Activated CD4-positive, alpha-beta memory T cell treated with anti-CD3 and anti-CD28 coated beads, Interleukin-2, amount 10 ng/mL, durations not matched to agents 7 days and 5 days (primary cell): ENCODE measurements at regions of chr17 and their contacts with region 1.

Region 1: DNA sequence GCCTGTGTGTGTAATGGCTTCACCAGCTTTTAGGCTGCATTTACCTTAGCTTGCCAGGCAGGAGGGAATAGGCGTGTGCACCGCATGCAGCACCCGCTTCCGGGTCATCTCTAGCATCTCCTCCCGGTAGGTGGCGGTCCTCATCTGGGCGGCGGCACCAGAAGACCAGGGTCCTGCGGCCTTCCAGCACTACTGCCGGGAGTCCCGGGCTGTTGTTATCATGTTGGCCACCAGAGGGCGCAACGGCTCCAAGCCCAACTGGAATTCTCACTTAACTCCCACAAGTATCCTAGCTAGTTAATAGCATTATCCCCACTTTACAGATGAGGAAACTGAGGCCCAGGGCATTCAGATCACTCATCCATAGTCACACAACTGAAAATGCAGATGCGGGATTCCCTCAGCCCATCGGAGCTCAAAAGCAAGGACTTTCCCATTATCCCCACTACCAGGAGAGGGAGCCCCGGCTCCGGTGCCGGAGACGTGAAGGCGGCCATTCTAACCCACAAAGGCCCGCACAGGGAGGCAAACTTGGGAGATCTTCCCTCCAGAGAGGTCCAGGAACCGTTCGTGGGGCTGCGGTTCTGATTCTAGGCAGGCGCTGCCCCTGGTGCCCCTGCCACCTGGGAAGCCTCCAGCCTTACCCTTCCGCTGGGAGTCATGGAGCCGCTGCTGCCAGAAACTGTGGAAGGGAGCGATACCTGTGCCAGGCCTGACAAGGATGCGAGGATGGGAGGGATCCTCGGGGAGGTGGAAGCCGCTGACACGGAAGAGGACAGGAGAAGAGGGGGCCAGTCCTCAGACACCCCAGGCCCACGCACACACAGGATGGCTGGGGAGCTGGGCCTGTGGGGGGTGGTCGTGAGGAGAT is 23.9 kb downstream of the LGALS9 start:
- DNase-seq: peak; percentile 66
- H3K4me3 Mint-ChIP-seq: no peak overlapping the region
- H3K27ac Mint-ChIP-seq: no peak overlapping the region
- H3K4me1 Mint-ChIP-seq: peaks cover 5% of the 10 kb centered on the region
- H3K27me3 Mint-ChIP-seq: peaks cover 2% of the 10 kb centered on the region

Region 2: GRCh38 chr17:27609611-27610303 is 45.1 kb before region 1 on chr17:
- CTCF ChIA-PET with region 1: interaction called, 59 read pairs
- POLR2A ChIA-PET with region 1: interaction called, 8 read pairs
- DNase-seq: peak; percentile 40
- H3K4me3 Mint-ChIP-seq: no peak overlapping the region
- H3K27ac Mint-ChIP-seq: no peak overlapping the region
- H3K4me1 Mint-ChIP-seq: peaks cover 17% of the 10 kb centered on the region
- H3K27me3 Mint-ChIP-seq: no peaks in the 10 kb centered on the region

Region 3: DNA sequence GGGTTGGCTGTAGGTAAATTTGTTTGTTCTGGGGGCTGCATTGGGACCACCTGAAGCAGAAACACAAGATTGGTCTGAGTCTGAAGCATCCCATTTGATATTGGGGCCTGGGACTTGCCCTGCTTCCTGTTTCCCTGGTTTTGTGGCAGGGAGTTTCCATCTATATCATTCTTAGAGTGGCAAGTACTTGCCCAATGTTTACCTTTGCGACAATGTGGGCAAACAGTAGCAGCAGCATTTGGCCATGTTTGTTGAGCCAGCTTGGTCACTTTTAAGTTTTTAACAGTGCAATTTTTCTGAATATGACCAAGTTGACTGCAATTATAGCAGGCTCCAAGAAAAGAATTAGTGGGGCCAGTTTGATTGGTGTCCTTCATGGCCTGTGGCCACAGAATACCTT is 37.9 kb after region 1 on chr17:
- CTCF ChIA-PET with region 1: no interaction called
- POLR2A ChIA-PET with region 1: no interaction called
- DNase-seq: no peak
- H3K4me3 Mint-ChIP-seq: no peak overlapping the region
- H3K27ac Mint-ChIP-seq: no peak overlapping the region
- H3K4me1 Mint-ChIP-seq: no peaks in the 10 kb centered on the region
- H3K27me3 Mint-ChIP-seq: peaks cover 5% of the 10 kb centered on the region

Region 4: GRCh38 chr17:27760069-27760885 is 105.4 kb after region 1 on chr17:
- CTCF ChIA-PET with region 1: interaction called, 19 read pairs
- POLR2A ChIA-PET with region 1: no interaction called
- DNase-seq: peak; percentile 73
- H3K4me3 Mint-ChIP-seq: no peak overlapping the region
- H3K27ac Mint-ChIP-seq: no peak overlapping the region
- H3K4me1 Mint-ChIP-seq: no peaks in the 10 kb centered on the region
- H3K27me3 Mint-ChIP-seq: no peaks in the 10 kb centered on the region